ENCODE measurements at regions of chr1 and their contacts with region 1.

Region 1: GRCh38 chr1:151539990-151540981 is at the start of gene TUFT1:
- DNase-seq: peak; percentile 97
- H3K4me3 ChIP-seq: peak within 1 kb of the TSS; percentile 43 to 76 (median 66)
- H3K27ac ChIP-seq: peak within 1 kb of the TSS; percentile 87 to 95 (median 90)
- H3K4me1 ChIP-seq: peaks cover 12 to 43% (median 28%) of the 10 kb centered on the region in 4 donors
- H3K27me3 ChIP-seq: no peaks in the 10 kb centered on the region
- CTCF ChIP-seq: peak in 1 of 5 experiments; percentile 3
- EP300 ChIP-seq: no peak
- POLR2A ChIP-seq: peak; percentile 98
- total RNA-seq, gene TUFT1: 22.8 to 65.5 (median 30.8) TPM

Region 2: DNA sequence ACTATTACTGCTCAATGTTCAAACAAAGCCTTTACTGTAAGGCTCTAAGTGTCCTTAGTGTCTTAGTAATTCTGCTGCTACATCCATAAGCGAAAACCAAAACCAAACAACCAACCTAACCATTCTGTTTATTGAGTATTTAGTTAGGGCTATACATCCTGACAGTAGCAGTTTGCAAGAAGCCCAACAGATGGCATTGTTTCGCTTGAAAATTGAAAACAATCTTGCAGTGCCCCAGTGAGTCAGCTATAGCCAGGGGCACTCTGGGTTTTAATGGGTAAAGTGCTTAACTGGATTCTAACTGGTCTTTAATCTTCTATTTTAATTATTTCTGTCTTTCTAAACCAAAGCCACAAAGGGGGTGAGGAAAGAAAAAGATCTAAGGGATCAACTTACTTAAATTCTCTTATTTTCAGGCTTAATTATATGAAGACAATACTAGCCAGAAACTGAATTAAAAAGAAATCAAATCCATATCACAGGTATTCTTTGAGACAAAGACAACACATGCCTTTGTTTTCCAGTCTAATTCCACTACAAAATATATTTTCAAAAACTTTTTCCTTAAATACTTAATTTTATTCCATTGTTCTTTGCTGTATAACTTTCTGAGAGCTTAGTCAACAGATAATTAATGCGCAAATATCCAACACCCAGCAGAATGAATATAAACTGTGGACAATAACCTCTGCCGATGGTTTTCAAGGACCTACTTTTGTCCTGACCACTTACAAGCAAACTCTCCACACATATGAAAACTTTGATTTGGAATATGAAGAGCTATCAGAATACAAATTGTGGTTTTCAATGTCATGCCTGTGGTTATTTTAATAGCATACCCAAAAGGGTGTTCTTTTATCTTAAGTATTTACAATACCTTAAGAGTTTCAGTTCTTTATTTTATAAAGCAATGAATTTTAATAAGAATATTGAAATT is 96.2 kb before region 1 on chr1:
- in situ Hi-C with region 1: no loop called
- intact Hi-C with region 1: loop called (anchors 10 kb)
- DNase-seq: peak; percentile 77
- H3K4me3 ChIP-seq: no peak overlapping the region
- H3K27ac ChIP-seq: peak overlapping the region in 3 of 4 donors; percentile 11 to 48 (median 45)
- H3K4me1 ChIP-seq: peaks cover 5 to 36% (median 14%) of the 10 kb centered on the region in 4 donors
- H3K27me3 ChIP-seq: no peaks in the 10 kb centered on the region
- CTCF ChIP-seq: peak; percentile 68 to 79 (median 74)
- EP300 ChIP-seq: no peak
- POLR2A ChIP-seq: no peak

Region 3: DNA sequence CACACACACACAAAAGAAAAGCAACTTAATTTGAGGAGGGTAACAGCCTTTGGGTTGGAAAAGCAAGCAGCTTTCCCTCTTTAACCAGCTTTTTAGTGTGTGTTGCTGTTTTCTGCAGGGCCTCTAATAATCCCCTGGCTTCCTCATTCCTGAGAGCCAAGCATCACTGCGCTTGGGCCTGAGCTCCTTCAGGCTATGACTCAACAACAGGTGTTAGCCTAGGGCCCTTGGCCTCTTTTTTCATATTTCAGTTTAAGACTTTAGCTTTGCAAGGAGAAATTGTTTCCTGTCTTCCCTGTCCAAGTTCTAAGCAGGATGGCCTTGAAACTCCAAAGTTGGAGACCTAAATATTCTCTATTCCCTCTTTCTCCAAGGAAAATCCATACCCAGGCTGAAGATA is 45.3 kb after region 1 on chr1:
- in situ Hi-C with region 1: no loop called
- intact Hi-C with region 1: no loop called
- DNase-seq: no peak
- H3K4me3 ChIP-seq: no peak overlapping the region
- H3K27ac ChIP-seq: no peak overlapping the region
- H3K4me1 ChIP-seq: peaks cover 0 to 12% (median 6%) of the 10 kb centered on the region in 4 donors
- H3K27me3 ChIP-seq: no peaks in the 10 kb centered on the region
- CTCF ChIP-seq: no peak
- EP300 ChIP-seq: no peak
- POLR2A ChIP-seq: no peak

Region 4: GRCh38 chr1:152367434-152367833 is 827.1 kb after region 1 on chr1:
- in situ Hi-C with region 1: no loop called
- intact Hi-C with region 1: no loop called
- DNase-seq: no peak
- H3K4me3 ChIP-seq: no peak overlapping the region
- H3K27ac ChIP-seq: no peak overlapping the region
- H3K4me1 ChIP-seq: no peaks in the 10 kb centered on the region
- H3K27me3 ChIP-seq: no peaks in the 10 kb centered on the region
- CTCF ChIP-seq: no peak
- EP300 ChIP-seq: no peak
- POLR2A ChIP-seq: no peak

Measured in transverse colon (tissue), 4 donors.